KBM-7 (cell line): ENCODE measurements at regions of chr20 and their contacts with region 1.

Region 1: GRCh38 chr20:13422637-13423036 is 201.6 kb downstream of the ISM1 start:
- DNase-seq: no peak

Region 2: DNA sequence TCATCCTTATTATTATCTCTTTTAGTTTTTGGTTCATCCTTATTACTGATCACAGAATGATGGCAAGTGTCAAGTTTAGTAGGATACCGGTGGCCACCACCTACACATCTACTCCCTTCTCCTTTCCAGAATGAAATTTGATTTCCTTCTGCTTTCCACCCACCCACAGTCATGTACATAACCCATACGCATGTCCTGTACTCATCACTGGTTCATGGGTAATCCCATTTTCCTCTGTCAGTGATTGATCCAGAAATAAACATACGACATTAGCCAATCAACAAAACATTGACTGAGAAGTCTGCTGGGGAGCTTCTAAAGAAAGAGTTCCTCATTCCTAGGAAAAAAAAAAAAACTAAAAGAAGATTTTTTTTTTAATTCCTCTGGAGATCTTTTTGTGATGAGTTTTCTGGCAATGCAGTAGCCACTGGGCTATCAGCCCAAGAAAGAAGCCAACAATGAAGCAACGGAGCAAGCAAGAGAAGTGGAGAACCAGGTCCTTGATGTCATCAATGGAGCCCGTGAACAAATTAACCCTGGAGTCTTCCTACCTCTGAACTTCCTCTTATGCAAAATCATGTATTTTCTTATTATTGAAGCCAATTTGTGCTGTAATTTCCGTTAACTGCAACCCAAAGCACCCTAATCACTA is 88.3 kb after region 1 on chr20:
- in situ Hi-C with region 1: loop called (anchors 25 kb)
- DNase-seq: no peak